T-cell (primary cell): ENCODE measurements at regions of chr2 and their contacts with region 1.

Region 1: DNA sequence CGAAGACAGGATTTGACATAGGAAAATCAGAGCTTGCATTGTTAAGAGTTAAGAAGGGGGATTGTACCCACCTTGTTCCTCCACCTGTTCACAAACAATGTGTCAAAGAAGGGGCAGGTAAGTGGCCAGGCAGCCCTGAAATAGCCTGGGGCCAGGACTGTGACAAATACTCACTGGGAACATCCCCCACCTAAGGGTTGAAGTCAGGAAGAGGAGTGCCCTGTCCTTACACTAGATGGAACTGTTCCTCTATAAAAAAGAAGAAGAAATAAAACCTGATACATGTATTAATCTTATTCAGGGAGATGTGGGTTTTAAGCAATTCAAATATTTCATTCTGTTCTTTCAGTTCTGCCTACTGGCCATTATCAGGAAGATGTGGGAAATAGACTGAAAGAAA is 41.9 kb downstream of the TACR1 start:
- DNase-seq: no peak
- ATAC-seq: no peak
- H3K4me3 ChIP-seq: no peak overlapping the region
- H3K4me3 Mint-ChIP-seq: no peak overlapping the region
- H3K27ac ChIP-seq: no peak overlapping the region
- H3K27ac Mint-ChIP-seq: no peak overlapping the region
- H3K4me1 ChIP-seq: no peaks in the 10 kb centered on the region
- H3K4me1 Mint-ChIP-seq: no peaks in the 10 kb centered on the region
- H3K27me3 ChIP-seq: no peaks in the 10 kb centered on the region
- H3K27me3 Mint-ChIP-seq: peaks cover 0 to 5% of the 10 kb centered on the region in 2 donors

Region 2: GRCh38 chr2:75130171-75130570 is 27.3 kb before region 1 on chr2:
- CTCF ChIA-PET with region 1: interaction called in 1 of 2 experiments, 14 read pairs
- POLR2A ChIA-PET with region 1: no interaction called
- DNase-seq: peak in 1 of 35 experiments; percentile 3
- ATAC-seq: no peak
- H3K4me3 ChIP-seq: no peak overlapping the region
- H3K4me3 Mint-ChIP-seq: no peak overlapping the region
- H3K27ac ChIP-seq: no peak overlapping the region
- H3K27ac Mint-ChIP-seq: no peak overlapping the region
- H3K4me1 ChIP-seq: no peaks in the 10 kb centered on the region
- H3K4me1 Mint-ChIP-seq: no peaks in the 10 kb centered on the region
- H3K27me3 ChIP-seq: no peaks in the 10 kb centered on the region
- H3K27me3 Mint-ChIP-seq: peaks cover 0 to 3% of the 10 kb centered on the region in 2 donors